ENCODE measurements at regions of chr1 and their contacts with region 1.

Region 1: DNA sequence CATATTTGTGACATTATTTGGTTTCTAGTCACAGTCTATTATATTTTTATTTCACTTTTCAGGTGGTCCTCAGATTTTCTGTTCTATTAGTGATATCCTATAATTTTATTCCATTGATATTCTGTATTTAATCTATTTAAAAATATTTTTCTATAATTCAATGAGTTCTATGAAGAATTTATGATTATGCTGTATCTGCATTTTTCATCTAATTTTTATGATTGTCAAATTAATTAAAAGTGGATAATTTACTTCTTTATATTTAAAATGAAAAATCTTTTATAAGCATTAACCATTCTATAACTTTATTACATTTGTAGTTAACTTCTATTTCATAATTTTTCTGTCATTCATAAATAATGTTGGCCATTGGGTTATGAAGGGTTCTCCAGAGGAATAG is 387.4 kb upstream of the LRRC7 start:
- DNase-seq: no peak
- H3K4me3 ChIP-seq: no peak overlapping the region
- H3K27ac ChIP-seq: no peak overlapping the region
- H3K4me1 ChIP-seq: no peaks in the 10 kb centered on the region
- H3K27me3 ChIP-seq: no peaks in the 10 kb centered on the region
- CTCF ChIP-seq: no peak
- EP300 ChIP-seq: no peak
- POLR2A ChIP-seq: no peak

Region 2: GRCh38 chr1:67184838-67185421 is 1995.4 kb before region 1 on chr1:
- in situ Hi-C with region 1: no loop called
- intact Hi-C with region 1: loop called (anchors 5 kb)
- DNase-seq: no peak
- H3K4me3 ChIP-seq: no peak overlapping the region
- H3K27ac ChIP-seq: no peak overlapping the region
- H3K4me1 ChIP-seq: no peaks in the 10 kb centered on the region
- H3K27me3 ChIP-seq: no peaks in the 10 kb centered on the region
- CTCF ChIP-seq: no peak
- EP300 ChIP-seq: no peak
- POLR2A ChIP-seq: no peak